AG04450 (cell line): ENCODE measurements at regions of chr6 and their contacts with region 1.

Region 1: GRCh38 chr6:148144917-148145521 is 197.6 kb upstream of the SASH1 start:
- DNase-seq: peak; percentile 36
- H3K4me3 ChIP-seq: no peak overlapping the region
- H3K27ac ChIP-seq: no peak overlapping the region
- H3K27me3 ChIP-seq: no peaks in the 10 kb centered on the region
- CTCF ChIP-seq: peak; percentile 94

Region 2: GRCh38 chr6:147126618-147127022 is 1018.4 kb before region 1 on chr6:
- CTCF ChIA-PET with region 1: no interaction called
- POLR2A ChIA-PET with region 1: no interaction called
- DNase-seq: no peak
- H3K4me3 ChIP-seq: no peak overlapping the region
- H3K27ac ChIP-seq: no peak overlapping the region
- H3K27me3 ChIP-seq: no peaks in the 10 kb centered on the region
- CTCF ChIP-seq: no peak

Region 3: GRCh38 chr6:147506704-147507114 is 638.3 kb before region 1 on chr6:
- CTCF ChIA-PET with region 1: interaction called, 19 read pairs
- POLR2A ChIA-PET with region 1: no interaction called
- DNase-seq: no peak
- H3K4me3 ChIP-seq: peak overlapping the region; percentile 72
- H3K27ac ChIP-seq: no peak overlapping the region
- H3K27me3 ChIP-seq: peaks cover 40% of the 10 kb centered on the region
- CTCF ChIP-seq: peak; percentile 89

Region 4: GRCh38 chr6:148128014-148128730 is 16.8 kb before region 1 on chr6:
- CTCF ChIA-PET with region 1: interaction called, 11 read pairs
- POLR2A ChIA-PET with region 1: no interaction called
- DNase-seq: no peak
- H3K4me3 ChIP-seq: no peak overlapping the region
- H3K27ac ChIP-seq: no peak overlapping the region
- H3K27me3 ChIP-seq: peaks cover 2% of the 10 kb centered on the region
- CTCF ChIP-seq: no peak

Region 5: GRCh38 chr6:148157542-148158240 is 12.7 kb after region 1 on chr6:
- CTCF ChIA-PET with region 1: interaction called, 10 read pairs
- POLR2A ChIA-PET with region 1: no interaction called
- DNase-seq: no peak
- H3K4me3 ChIP-seq: no peak overlapping the region
- H3K27ac ChIP-seq: no peak overlapping the region
- H3K27me3 ChIP-seq: peaks cover 16% of the 10 kb centered on the region
- CTCF ChIP-seq: no peak

Region 6: GRCh38 chr6:148166339-148166968 is 21.4 kb after region 1 on chr6:
- CTCF ChIA-PET with region 1: interaction called, 12 read pairs
- POLR2A ChIA-PET with region 1: no interaction called
- DNase-seq: peak; percentile 33
- H3K4me3 ChIP-seq: no peak overlapping the region
- H3K27ac ChIP-seq: no peak overlapping the region
- H3K27me3 ChIP-seq: no peaks in the 10 kb centered on the region
- CTCF ChIP-seq: peak; percentile 72

Region 7: DNA sequence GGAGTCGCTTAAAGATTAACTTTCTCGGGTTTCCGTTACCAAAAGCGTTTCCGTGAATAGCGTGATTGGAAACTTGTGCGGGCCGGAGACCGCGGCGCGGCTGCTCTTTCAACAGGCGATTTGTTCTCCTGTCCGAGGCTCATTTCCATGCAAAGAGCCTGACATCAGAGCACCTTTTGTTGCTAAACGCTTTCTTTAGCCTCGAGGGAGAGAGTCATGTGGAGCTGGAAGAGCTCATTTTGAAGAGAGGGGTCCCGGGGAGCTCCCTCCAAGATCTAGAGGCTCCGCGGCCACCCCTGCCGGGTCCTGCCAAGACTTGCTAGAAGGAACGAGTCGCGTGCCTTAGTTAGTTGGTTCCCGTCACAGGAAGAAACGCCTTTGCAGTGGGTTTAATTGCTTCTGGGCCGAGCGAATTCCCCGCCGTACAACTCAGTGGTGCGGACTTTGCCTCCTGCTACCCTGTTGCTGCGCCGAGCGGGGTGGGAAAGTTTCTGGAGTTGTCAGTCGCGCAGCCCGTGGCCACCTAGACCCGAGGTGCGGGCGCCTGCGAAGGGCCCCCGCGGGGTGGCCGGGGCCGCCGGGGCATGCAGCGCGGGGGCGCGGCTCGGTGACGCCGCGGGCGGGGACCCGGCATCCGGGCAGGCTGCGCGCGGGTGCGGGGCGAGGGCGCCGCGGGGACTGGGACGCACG is 197.5 kb after region 1 on chr6 and contains the start of gene SASH1:
- CTCF ChIA-PET with region 1: no interaction called
- POLR2A ChIA-PET with region 1: interaction called, 10 read pairs
- DNase-seq: peak; percentile 38
- H3K4me3 ChIP-seq: peak within 1 kb of the TSS; percentile 83
- H3K27ac ChIP-seq: peak within 1 kb of the TSS; percentile 92
- H3K27me3 ChIP-seq: no peaks in the 10 kb centered on the region
- CTCF ChIP-seq: no peak
- polyA plus RNA-seq, gene SASH1: 26.6 and 27.0 TPM in 2 replicates

Region 8: DNA sequence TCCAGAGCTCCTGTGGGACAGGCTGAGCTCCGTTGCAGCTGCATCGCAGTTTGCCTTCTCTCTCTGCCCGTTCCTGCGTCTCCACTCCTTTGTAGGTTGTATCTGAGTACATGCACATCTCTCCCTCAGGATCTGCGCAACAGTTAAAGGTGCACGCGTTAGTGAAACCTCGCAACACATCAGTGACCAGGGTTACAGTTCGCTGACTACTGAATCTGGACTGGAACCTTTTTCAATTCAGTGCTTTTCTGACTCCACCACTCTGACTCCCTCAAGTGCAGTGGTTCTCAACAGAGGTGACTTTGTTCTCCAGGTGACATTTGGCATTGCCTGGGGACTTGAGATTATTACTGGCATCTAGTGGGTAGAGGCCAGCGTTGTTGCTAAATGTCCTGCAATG is 645.8 kb after region 1 on chr6:
- CTCF ChIA-PET with region 1: no interaction called
- POLR2A ChIA-PET with region 1: no interaction called
- DNase-seq: no peak
- H3K4me3 ChIP-seq: no peak overlapping the region
- H3K27ac ChIP-seq: no peak overlapping the region
- H3K27me3 ChIP-seq: no peaks in the 10 kb centered on the region
- CTCF ChIP-seq: no peak